Mammary epithelial cell (primary cell): ENCODE measurements at regions of chr1 and their contacts with region 1.

Region 1: DNA sequence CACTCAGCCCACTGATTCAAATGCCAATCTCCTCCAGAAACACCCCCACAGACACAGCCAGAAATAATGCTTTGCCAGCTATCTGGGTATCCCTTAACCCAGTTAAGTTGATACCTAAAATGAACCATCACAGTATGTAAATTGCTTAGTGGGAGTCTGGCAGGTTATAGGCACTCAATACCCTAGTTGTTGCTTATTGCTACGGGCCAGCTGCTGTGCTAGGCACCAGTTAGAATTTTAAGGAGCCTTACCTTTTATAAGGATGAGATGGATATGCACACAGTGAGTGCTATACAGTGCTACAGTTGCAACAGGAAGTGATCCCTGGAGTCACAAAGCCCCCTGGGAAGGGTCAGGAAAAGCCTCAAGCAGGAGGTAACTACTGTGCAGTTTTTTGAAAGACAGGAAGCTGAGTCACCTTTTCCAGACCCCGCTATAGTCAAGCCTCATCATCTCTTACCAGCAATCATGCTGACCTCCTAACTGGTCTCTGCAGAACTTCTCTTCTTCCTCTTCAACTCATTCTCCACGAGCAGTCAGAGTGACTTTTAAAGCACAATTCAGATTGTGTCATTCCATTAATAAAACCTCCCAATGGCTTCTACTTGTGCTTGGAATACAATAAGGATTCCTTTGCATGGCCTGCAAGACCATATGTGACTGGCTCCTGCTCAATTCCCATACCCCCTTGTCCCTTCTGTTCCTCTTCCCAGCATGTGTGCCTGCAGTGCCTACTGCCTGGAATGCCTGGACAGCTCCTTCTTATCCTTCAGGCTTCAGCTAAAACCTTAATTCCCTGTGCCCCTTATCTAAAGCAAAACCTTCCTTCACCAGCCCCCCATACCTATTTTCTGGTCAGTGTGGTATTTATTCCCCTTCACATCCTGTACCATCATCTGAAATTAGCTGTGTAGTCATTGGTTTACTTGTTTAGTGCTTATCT is 10.4 kb upstream of the TLR5 start:
- DNase-seq: no peak
- H3K4me3 ChIP-seq: no peak overlapping the region
- H3K27ac ChIP-seq: no peak overlapping the region
- H3K4me1 ChIP-seq: no peaks in the 10 kb centered on the region
- H3K27me3 ChIP-seq: no peaks in the 10 kb centered on the region
- CTCF ChIP-seq: no peak

Region 2: DNA sequence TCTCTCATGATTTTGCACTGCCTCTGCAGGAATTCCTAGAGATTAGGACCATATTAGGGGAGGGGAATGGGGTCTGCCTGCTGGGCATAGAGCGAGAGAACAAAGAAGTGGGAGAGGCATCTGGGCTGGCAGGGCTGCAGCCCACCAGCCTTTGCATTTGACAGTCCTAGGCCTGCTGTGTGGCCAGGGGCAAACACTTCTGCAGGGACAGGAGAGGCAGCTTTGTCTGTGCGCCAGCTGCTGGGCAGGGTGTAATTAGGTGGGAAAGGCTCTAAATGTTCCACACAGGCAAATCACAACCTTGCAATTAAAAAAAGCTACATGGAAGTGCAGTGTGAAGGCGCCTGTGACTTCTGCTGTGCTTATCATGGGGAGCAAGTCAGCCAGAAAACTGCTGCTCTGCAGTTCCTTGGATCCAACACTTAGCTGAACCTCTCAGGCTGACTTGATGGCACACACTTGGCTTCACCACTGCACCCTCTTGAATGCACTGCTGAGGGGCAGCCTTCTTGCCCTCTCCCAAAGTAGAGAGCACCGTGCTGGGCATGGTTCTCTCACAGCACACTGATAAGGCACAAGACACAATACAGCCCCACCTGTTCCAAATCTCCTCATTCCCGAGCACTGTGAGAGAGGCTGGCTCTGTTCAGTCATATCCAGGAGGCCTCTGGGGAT is 63.2 kb after region 1 on chr1:
- CTCF ChIA-PET with region 1: no interaction called
- dilution Hi-C with region 1: loop called (anchors 5 kb)
- in situ Hi-C with region 1: no loop called
- intact Hi-C with region 1: no loop called
- DNase-seq: no peak
- H3K4me3 ChIP-seq: no peak overlapping the region
- H3K27ac ChIP-seq: no peak overlapping the region
- H3K4me1 ChIP-seq: no peaks in the 10 kb centered on the region
- H3K27me3 ChIP-seq: no peaks in the 10 kb centered on the region
- CTCF ChIP-seq: no peak